ENCODE measurements at regions of chr22 and their contacts with region 1.

Region 1: GRCh38 chr22:40177738-40178416 is at the start of gene TNRC6B:
- H3K4me3 Mint-ChIP-seq: peak within 1 kb of the TSS; percentile 78
- H3K27ac Mint-ChIP-seq: peak within 1 kb of the TSS; percentile 84
- H3K4me1 Mint-ChIP-seq: peaks cover 49% of the 10 kb centered on the region
- H3K27me3 Mint-ChIP-seq: no peaks in the 10 kb centered on the region

Region 2: DNA sequence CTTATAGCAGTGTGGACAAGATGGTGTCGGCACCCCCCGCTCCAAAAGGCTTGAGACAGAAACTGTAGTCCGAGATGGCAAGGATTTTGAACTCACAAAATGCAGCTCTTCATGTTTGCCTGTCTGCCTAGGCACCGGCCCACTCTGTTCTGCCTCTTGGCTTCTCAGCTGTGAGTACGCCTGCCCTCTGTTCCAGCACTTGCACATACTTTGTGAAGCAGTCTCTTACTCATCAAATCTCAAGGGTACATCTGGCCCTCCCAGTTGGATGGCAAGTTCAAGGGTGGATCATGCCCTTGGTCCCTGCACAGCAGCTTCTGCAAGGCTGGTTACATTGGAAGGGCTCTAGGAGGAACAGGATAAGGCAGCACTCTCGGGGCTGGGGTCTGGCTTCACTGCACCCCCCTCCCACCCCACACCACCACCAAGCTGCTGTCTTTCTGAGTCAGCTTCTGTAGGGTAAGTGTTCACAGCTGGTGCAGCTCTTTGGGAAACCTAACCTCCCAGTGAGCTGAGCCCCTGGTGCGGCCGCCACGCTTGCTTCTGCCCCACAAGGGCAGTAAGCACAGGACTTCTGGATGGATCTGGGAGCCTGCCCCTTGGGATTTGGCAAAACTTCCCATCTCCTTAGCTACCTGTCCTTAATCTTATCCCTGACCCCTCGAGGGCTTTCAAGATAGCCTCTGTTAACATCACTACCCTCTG is 146.0 kb before region 1 on chr22:
- intact Hi-C with region 1: no loop called
- H3K4me3 Mint-ChIP-seq: no peak overlapping the region
- H3K27ac Mint-ChIP-seq: no peak overlapping the region
- H3K4me1 Mint-ChIP-seq: no peaks in the 10 kb centered on the region
- H3K27me3 Mint-ChIP-seq: peaks cover 17% of the 10 kb centered on the region

Region 3: GRCh38 chr22:40044102-40044869 is 133.6 kb before region 1 on chr22:
- intact Hi-C with region 1: loop called (anchors 5 kb)
- H3K4me3 Mint-ChIP-seq: peak overlapping the region; percentile 86
- H3K27ac Mint-ChIP-seq: peak overlapping the region; percentile 95
- H3K4me1 Mint-ChIP-seq: peaks cover 50% of the 10 kb centered on the region
- H3K27me3 Mint-ChIP-seq: peaks cover 6% of the 10 kb centered on the region

Region 4: GRCh38 chr22:40147388-40148176 is 30.3 kb before region 1 on chr22:
- intact Hi-C with region 1: no loop called
- H3K4me3 Mint-ChIP-seq: no peak overlapping the region
- H3K27ac Mint-ChIP-seq: no peak overlapping the region
- H3K4me1 Mint-ChIP-seq: peaks cover 6% of the 10 kb centered on the region
- H3K27me3 Mint-ChIP-seq: no peaks in the 10 kb centered on the region

Region 5: DNA sequence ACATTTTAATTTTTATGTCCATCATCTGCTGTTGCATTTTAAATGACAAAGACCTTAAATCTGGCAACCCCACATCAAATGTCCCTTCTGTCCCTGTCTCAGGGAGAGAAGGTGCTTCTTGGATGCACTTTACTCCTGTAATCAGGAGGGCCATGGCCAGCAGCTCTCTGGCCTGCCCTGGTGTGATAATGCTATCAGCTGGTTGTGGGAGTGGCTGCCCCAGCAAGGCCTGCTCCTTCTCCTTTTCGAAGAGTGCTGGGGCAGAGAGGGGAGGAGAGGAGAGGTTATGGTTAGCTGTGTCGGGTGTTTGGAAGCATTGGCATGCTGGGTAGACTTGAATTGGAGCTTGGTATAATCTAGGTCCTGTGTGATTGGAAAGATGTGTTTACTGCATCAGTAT is 12.6 kb after region 1 on chr22:
- intact Hi-C with region 1: loop called (anchors 2 kb)
- H3K4me3 Mint-ChIP-seq: no peak overlapping the region
- H3K27ac Mint-ChIP-seq: peak overlapping the region; percentile 13
- H3K4me1 Mint-ChIP-seq: peaks cover 46% of the 10 kb centered on the region
- H3K27me3 Mint-ChIP-seq: no peaks in the 10 kb centered on the region

Region 6: DNA sequence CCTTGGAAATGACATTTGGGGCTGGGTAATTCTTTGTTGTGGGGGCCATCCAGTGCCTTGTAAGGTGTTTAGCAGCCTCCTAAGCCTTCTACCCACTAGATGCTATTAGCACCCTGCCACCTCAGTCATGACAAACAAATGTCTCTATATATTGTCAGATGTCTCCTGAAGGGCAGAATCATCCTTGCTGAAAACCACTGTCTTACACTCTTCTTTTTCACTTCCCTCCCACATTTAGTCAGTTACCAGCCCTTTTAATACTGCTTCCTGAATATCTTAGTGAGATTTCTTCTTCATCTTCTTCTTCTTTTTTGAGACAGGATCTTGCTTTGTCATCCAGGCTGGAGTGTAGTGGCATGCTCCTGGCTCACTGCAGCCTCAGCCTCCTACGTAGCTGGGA is 32.9 kb after region 1 on chr22:
- intact Hi-C with region 1: loop called (anchors 2 kb)
- H3K4me3 Mint-ChIP-seq: peak overlapping the region; percentile 34
- H3K27ac Mint-ChIP-seq: peak overlapping the region; percentile 88
- H3K4me1 Mint-ChIP-seq: peaks cover 69% of the 10 kb centered on the region
- H3K27me3 Mint-ChIP-seq: no peaks in the 10 kb centered on the region

Region 7: DNA sequence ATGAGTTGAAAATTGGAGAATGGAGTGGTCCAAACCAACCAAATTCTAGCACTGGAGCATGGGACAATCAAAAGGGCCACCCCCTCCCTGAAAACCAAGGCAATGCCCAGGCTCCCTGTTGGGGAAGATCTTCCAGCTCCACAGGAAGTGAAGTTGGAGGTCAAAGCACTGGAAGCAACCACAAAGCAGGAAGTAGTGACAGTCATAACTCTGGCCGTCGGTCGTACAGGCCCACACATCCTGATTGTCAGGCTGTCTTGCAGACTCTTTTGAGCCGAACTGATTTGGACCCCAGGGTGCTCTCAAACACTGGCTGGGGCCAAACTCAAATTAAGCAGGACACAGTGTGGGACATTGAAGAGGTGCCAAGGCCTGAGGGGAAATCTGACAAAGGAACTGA is 87.9 kb after region 1 on chr22:
- intact Hi-C with region 1: loop called (anchors 5 kb)
- H3K4me3 Mint-ChIP-seq: peak overlapping the region; percentile 39
- H3K27ac Mint-ChIP-seq: peak overlapping the region; percentile 59
- H3K4me1 Mint-ChIP-seq: peaks cover 15% of the 10 kb centered on the region
- H3K27me3 Mint-ChIP-seq: no peaks in the 10 kb centered on the region

Measured in dendritic cell treated with granulocyte-macrophage colony-stimulating factor and Interleukin-4, amounts not matched to agents 40 ng/mL and 50 ng/mL, for 4 days (primary cell).